Mammary epithelial cell (primary cell): ENCODE measurements at regions of chr5 and their contacts with region 1.

Region 1: GRCh38 chr5:134086943-134087305 is 27.6 kb upstream of the TCF7 start:
- DNase-seq: no peak
- H3K4me3 ChIP-seq: no peak overlapping the region
- H3K27ac ChIP-seq: no peak overlapping the region
- H3K4me1 ChIP-seq: peaks cover 14% of the 10 kb centered on the region
- H3K27me3 ChIP-seq: no peaks in the 10 kb centered on the region
- CTCF ChIP-seq: no peak

Region 2: DNA sequence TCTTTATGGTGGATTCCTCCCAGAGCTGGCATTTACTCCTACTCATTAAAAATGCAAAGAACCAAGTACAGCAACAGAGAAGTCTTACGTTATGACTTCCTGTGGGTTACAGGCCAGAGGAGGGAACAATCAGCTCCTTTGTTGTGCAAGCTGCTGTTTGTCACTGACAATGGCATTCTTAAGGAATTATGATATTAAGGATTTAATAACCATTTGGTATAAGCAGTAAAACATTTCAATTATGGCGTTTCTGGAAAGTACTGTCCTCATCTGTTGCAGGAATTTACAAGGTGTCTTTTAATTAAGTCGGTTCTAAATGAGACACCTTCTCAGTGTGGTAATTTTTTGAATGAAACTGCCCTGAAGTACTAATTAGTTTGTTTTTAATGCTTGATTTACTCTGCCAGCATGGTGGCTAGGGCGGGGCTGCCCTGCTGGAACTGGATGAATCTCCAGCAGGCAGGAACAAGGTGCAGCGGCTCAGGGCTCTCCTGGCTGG is 33.0 kb before region 1 on chr5:
- CTCF ChIA-PET with region 1: no interaction called
- dilution Hi-C with region 1: loop called (anchors 5 kb)
- in situ Hi-C with region 1: no loop called
- intact Hi-C with region 1: loop called (anchors 5 kb)
- DNase-seq: peak; percentile 80
- H3K4me3 ChIP-seq: no peak overlapping the region
- H3K27ac ChIP-seq: peak overlapping the region; percentile 87
- H3K4me1 ChIP-seq: peaks cover 33% of the 10 kb centered on the region
- H3K27me3 ChIP-seq: no peaks in the 10 kb centered on the region
- CTCF ChIP-seq: no peak

Region 3: GRCh38 chr5:134125039-134126015 is 38.4 kb after region 1 on chr5:
- CTCF ChIA-PET with region 1: no interaction called
- dilution Hi-C with region 1: loop called (anchors 5 kb)
- in situ Hi-C with region 1: no loop called
- intact Hi-C with region 1: no loop called
- DNase-seq: peak; percentile 83
- H3K4me3 ChIP-seq: no peak overlapping the region
- H3K27ac ChIP-seq: peak overlapping the region; percentile 13
- H3K4me1 ChIP-seq: peaks cover 46% of the 10 kb centered on the region
- H3K27me3 ChIP-seq: no peaks in the 10 kb centered on the region
- CTCF ChIP-seq: no peak

Region 4: GRCh38 chr5:134209477-134210240 is 122.7 kb after region 1 on chr5:
- CTCF ChIA-PET with region 1: no interaction called
- dilution Hi-C with region 1: no loop called
- in situ Hi-C with region 1: no loop called
- intact Hi-C with region 1: no loop called
- DNase-seq: no peak
- H3K4me3 ChIP-seq: no peak overlapping the region
- H3K27ac ChIP-seq: no peak overlapping the region
- H3K4me1 ChIP-seq: no peaks in the 10 kb centered on the region
- H3K27me3 ChIP-seq: no peaks in the 10 kb centered on the region
- CTCF ChIP-seq: no peak